ENCODE measurements at regions of chr22 and their contacts with region 1.

Region 1: DNA sequence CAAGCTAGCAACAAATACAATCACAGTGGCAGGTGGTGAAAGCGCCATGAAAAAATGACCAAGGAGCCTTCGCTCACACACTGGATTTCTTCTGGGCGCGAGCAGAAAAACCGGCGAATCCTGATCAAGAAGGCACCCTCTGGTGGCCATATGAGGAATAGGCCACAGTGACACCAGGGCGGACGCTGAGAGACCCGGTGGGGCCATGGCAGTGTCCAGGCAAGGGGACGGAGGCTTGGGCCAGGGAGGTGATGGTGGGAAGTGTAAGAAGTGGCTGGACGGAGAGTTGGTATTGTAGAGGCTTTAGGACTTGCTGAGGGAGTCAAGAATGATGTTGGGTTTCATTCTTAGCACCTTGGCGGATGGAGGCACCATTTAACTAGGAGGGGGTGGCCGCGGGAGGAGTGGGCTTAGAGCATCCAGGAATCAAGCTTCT is 16.9 kb upstream of the RAC2 start:
- DNase-seq: no peak
- ATAC-seq: peak; percentile 74
- H3K4me3 ChIP-seq: no peak overlapping the region
- H3K27ac ChIP-seq: no peak overlapping the region
- H3K4me1 ChIP-seq: peaks cover 2% of the 10 kb centered on the region; the same call in 1 of the 2 replicates
- H3K27me3 ChIP-seq: no peaks in the 10 kb centered on the region
- CTCF ChIP-seq: peak; percentile 83 to 96 (median 92)
- EP300 ChIP-seq: no peak
- POLR2A ChIP-seq: no peak
- RAD21 ChIP-seq: peak; percentile 84

Region 2: GRCh38 chr22:36839356-36840073 is 421.4 kb before region 1 on chr22:
- CTCF ChIA-PET with region 1: no interaction called
- POLR2A ChIA-PET with region 1: no interaction called
- RAD21 ChIA-PET with region 1: no interaction called
- SMC1A ChIA-PET with region 1: no interaction called
- in situ Hi-C with region 1: no loop called
- intact Hi-C with region 1: no loop called
- DNase-seq: no peak
- ATAC-seq: peak; percentile 48; the same call in 2 of the 3 replicates
- H3K4me3 ChIP-seq: no peak overlapping the region
- H3K27ac ChIP-seq: no peak overlapping the region
- H3K4me1 ChIP-seq: no peaks in the 10 kb centered on the region; the same call in 1 of the 2 replicates
- H3K27me3 ChIP-seq: no peaks in the 10 kb centered on the region; a peak in 1 of 4 replicates
- CTCF ChIP-seq: no peak
- EP300 ChIP-seq: no peak
- POLR2A ChIP-seq: no peak
- RAD21 ChIP-seq: no peak

Region 3: GRCh38 chr22:37077884-37078485 is 182.9 kb before region 1 on chr22:
- CTCF ChIA-PET with region 1: interaction called, 6 read pairs
- POLR2A ChIA-PET with region 1: no interaction called
- RAD21 ChIA-PET with region 1: no interaction called
- SMC1A ChIA-PET with region 1: interaction called, 4 read pairs
- in situ Hi-C with region 1: no loop called
- intact Hi-C with region 1: loop called (anchors 2 kb)
- DNase-seq: no peak
- ATAC-seq: peak; percentile 91
- H3K4me3 ChIP-seq: no peak overlapping the region
- H3K27ac ChIP-seq: no peak overlapping the region
- H3K4me1 ChIP-seq: peaks cover 10% of the 10 kb centered on the region
- H3K27me3 ChIP-seq: peaks cover 0 to 3% of the 10 kb centered on the region in 2 experiments; a peak in 2 of 4 replicates
- CTCF ChIP-seq: peak; percentile 96 to 99 (median 98)
- EP300 ChIP-seq: no peak
- POLR2A ChIP-seq: no peak
- RAD21 ChIP-seq: peak; percentile 85

Region 4: GRCh38 chr22:37199103-37199759 is 61.7 kb before region 1 on chr22:
- CTCF ChIA-PET with region 1: interaction called, 102 read pairs
- POLR2A ChIA-PET with region 1: interaction called, 7 read pairs
- RAD21 ChIA-PET with region 1: interaction called, 63 read pairs
- SMC1A ChIA-PET with region 1: interaction called, 57 read pairs
- in situ Hi-C with region 1: no loop called
- intact Hi-C with region 1: loop called (anchors 2 kb)
- DNase-seq: peak; percentile 98
- ATAC-seq: peak; percentile 94
- H3K4me3 ChIP-seq: peak overlapping the region; percentile 72
- H3K27ac ChIP-seq: peak overlapping the region; percentile 94
- H3K4me1 ChIP-seq: peaks cover 34% of the 10 kb centered on the region
- H3K27me3 ChIP-seq: no peaks in the 10 kb centered on the region
- CTCF ChIP-seq: peak; percentile 91 to 95 (median 93)
- EP300 ChIP-seq: no peak
- POLR2A ChIP-seq: peak; percentile 95
- RAD21 ChIP-seq: peak; percentile 69

Region 5: GRCh38 chr22:37237371-37238268 is 23.3 kb before region 1 on chr22:
- CTCF ChIA-PET with region 1: interaction called, 265 read pairs
- POLR2A ChIA-PET with region 1: interaction called, 51 read pairs
- RAD21 ChIA-PET with region 1: interaction called, 132 read pairs
- SMC1A ChIA-PET with region 1: interaction called, 165 read pairs
- in situ Hi-C with region 1: no loop called
- intact Hi-C with region 1: no loop called
- DNase-seq: no peak
- ATAC-seq: no peak
- H3K4me3 ChIP-seq: no peak overlapping the region
- H3K27ac ChIP-seq: no peak overlapping the region
- H3K4me1 ChIP-seq: peaks cover 82% of the 10 kb centered on the region
- H3K27me3 ChIP-seq: no peaks in the 10 kb centered on the region
- CTCF ChIP-seq: no peak
- EP300 ChIP-seq: no peak
- POLR2A ChIP-seq: no peak
- RAD21 ChIP-seq: no peak

Region 6: DNA sequence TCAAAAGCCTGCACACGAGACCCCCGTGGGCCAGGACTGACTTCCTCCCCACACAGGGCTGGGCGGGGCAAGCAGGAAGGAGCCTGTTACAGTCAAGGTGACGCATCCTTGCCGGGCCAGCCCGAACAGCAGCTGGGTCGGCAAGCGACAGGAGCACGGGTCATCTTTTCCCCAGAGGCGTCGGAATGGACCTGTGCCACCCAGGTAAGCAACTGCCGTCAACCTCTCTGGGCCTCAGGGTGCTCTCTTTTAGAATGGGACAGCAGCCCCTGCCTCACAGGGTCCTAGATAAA is 21.4 kb after region 1 on chr22 and contains the start of gene CYTH4:
- CTCF ChIA-PET with region 1: interaction called, 124 read pairs
- POLR2A ChIA-PET with region 1: interaction called, 3 read pairs
- RAD21 ChIA-PET with region 1: interaction called, 17 read pairs
- SMC1A ChIA-PET with region 1: interaction called, 4 read pairs
- in situ Hi-C with region 1: no loop called
- intact Hi-C with region 1: no loop called
- DNase-seq: no peak
- ATAC-seq: peak; percentile 79
- H3K4me3 ChIP-seq: peak within 1 kb of the TSS; percentile 69
- H3K27ac ChIP-seq: peak within 1 kb of the TSS; percentile 93
- H3K4me1 ChIP-seq: peaks cover 30% of the 10 kb centered on the region
- H3K27me3 ChIP-seq: no peaks in the 10 kb centered on the region
- CTCF ChIP-seq: no peak
- EP300 ChIP-seq: no peak
- POLR2A ChIP-seq: peak; percentile 80
- RAD21 ChIP-seq: no peak
- polyA plus RNA-seq, gene CYTH4: 1.5 to 1.8 TPM

Region 7: GRCh38 chr22:37292641-37293040 is 31.7 kb after region 1 on chr22:
- CTCF ChIA-PET with region 1: no interaction called
- POLR2A ChIA-PET with region 1: no interaction called
- RAD21 ChIA-PET with region 1: no interaction called
- SMC1A ChIA-PET with region 1: no interaction called
- in situ Hi-C with region 1: no loop called
- intact Hi-C with region 1: no loop called
- DNase-seq: no peak
- ATAC-seq: no peak
- H3K4me3 ChIP-seq: no peak overlapping the region
- H3K27ac ChIP-seq: no peak overlapping the region
- H3K4me1 ChIP-seq: peaks cover 5% of the 10 kb centered on the region
- H3K27me3 ChIP-seq: no peaks in the 10 kb centered on the region
- CTCF ChIP-seq: no peak
- EP300 ChIP-seq: no peak
- POLR2A ChIP-seq: no peak
- RAD21 ChIP-seq: no peak

Region 8: DNA sequence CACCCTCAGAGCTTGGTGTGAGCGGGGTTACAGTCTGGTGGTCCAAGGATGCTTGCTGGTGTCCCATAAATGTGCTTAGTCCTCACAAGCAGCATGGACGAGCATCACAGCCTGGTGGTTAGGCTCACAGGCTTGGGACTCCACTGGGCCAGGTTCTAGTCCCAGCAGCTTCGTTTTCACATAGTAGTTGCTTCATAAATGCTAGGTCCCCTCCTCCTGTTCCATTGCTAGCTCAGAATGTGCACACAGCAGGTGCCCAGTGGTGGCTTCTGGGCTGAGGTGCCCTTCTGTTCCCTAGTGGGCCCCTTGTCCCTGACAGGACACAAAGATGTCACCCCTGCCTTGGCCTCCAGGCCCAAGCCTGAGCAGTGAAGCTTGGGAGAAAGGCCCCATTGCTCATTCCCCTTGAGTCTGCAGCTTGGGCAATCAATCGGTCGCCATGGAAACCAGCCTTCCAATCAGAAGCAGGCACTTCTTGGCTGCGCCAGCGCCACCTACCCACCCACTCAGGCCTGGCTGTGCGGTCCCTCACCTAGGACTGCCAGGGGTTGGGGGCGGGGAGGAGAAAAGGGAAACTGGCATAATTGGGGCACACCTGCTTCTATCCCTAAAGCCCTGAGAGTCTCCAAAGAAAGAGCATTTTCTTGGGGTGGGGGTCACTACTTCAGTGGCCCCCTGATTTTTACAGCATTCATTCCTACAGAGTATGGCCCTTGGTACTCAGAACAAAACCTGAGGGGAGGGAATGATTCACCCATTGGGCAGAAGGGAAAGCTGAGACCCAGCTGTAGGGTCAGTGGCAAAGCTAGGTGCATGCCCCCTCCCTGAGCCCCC is 69.5 kb after region 1 on chr22:
- CTCF ChIA-PET with region 1: interaction called, 16 read pairs
- POLR2A ChIA-PET with region 1: no interaction called
- RAD21 ChIA-PET with region 1: no interaction called
- SMC1A ChIA-PET with region 1: interaction called, 6 read pairs
- in situ Hi-C with region 1: no loop called
- intact Hi-C with region 1: no loop called
- DNase-seq: no peak
- ATAC-seq: peak; percentile 90
- H3K4me3 ChIP-seq: no peak overlapping the region
- H3K27ac ChIP-seq: no peak overlapping the region
- H3K4me1 ChIP-seq: no peaks in the 10 kb centered on the region; the same call in 1 of the 2 replicates
- H3K27me3 ChIP-seq: peaks cover 8 to 9% of the 10 kb centered on the region in 2 experiments
- CTCF ChIP-seq: peak; percentile 24 to 34 (median 26); a peak in 4 of 6 replicates
- EP300 ChIP-seq: no peak
- POLR2A ChIP-seq: no peak
- RAD21 ChIP-seq: no peak

Measured in GM12878 (cell line).